ENCODE measurements at regions of chr15 and their contacts with region 1.

Region 1: DNA sequence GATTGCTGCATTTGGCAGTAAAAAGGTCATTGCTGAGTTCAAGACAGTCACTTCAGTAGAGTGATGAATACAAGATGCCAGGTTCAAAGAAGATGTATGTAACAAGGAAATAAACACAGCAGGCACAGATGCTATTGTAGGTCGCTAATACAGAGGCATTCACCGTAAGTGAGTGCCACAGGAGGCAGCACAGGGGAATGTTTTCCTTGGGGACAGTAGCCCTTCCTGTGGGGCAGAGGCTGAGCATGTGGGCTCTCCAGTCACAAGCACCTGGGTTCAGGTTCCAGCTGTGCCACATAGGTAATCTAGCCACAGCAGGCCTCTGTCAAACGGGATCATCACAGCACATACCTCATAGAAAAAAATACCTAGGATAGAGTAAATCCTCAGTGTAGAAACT is 86.3 kb downstream of the RSL24D1 start:
- DNase-seq: no peak
- H3K4me3 ChIP-seq: no peak overlapping the region
- H3K27ac ChIP-seq: no peak overlapping the region
- H3K4me1 ChIP-seq: no peaks in the 10 kb centered on the region
- H3K27me3 ChIP-seq: no peaks in the 10 kb centered on the region
- CTCF ChIP-seq: no peak
- POLR2A ChIP-seq: no peak

Region 2: DNA sequence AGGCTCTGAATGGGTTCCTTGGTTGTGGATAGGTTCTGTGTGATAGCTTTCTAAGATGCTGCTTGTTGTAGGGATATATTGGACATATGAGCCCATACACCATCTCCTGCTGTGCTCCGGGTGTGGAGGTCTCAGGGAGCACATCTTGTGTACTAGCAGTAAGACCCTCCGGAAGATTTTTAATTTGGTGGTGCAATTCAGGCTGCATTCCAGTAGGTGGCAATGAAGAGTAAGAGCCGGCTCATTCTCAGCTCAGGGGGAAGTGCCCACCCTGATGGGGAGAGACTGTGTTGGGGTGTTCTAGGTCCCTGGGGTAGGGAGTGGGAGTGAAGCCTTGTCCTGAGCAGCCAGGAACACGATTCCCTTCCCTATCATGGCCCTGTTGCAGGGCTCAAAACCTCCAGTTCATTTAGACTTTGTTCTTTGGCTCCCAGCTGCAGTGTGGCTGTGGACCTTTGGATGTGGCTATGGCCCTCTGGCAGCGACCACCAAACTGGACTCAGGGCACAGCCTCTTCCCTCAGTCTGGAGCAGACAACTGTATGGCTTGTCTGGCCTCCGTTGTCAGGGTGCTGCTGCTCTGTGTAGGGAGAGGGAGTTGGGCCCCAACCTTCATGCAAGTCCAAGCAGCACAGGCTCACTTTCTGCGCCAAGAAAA is 1027.5 kb before region 1 on chr15:
- intact Hi-C with region 1: loop called (anchors 10 kb)
- DNase-seq: no peak
- H3K4me3 ChIP-seq: no peak overlapping the region
- H3K27ac ChIP-seq: no peak overlapping the region
- H3K4me1 ChIP-seq: no peaks in the 10 kb centered on the region
- H3K27me3 ChIP-seq: peaks cover 0 to 9% (median 0%) of the 10 kb centered on the region in 7 donors
- CTCF ChIP-seq: peak in 8 of 11 experiments; percentile 31 to 64 (median 50)
- POLR2A ChIP-seq: no peak